Dorsolateral prefrontal cortex (tissue), 120 donors: ENCODE measurements at regions of chr17 and their contacts with region 1.

Region 1: GRCh38 chr17:72151565-72152391 is 31.0 kb downstream of the SOX9 start:
- DNase-seq: peak in 9 of 10 donors; percentile 46 to 81 (median 63)
- H3K4me3 ChIP-seq: peak overlapping the region in 53 of 59 donors; percentile 4 to 64 (median 37)
- H3K27ac ChIP-seq: peak overlapping the region; percentile 29 to 98 (median 93)
- H3K27me3 ChIP-seq: no peaks in the 10 kb centered on the region
- CTCF ChIP-seq: peak in 5 of 56 donors; percentile 4 to 16 (median 12)

Region 2: GRCh38 chr17:72171703-72172667 is 20.2 kb after region 1 on chr17:
- intact Hi-C with region 1: loop called in 1 of 2 experiments (anchors 1 kb)
- DNase-seq: peak in 4 of 10 donors; percentile 32 to 67 (median 52)
- H3K4me3 ChIP-seq: peak overlapping the region in 18 of 59 donors; percentile 0 to 44 (median 11)
- H3K27ac ChIP-seq: peak overlapping the region in 56 of 59 donors; percentile 2 to 80 (median 57)
- H3K27me3 ChIP-seq: no peaks in the 10 kb centered on the region
- CTCF ChIP-seq: peak in 51 of 56 donors; percentile 8 to 66 (median 39)

Region 3: GRCh38 chr17:72743037-72743467 is 591.3 kb after region 1 on chr17:
- intact Hi-C with region 1: no loop called
- DNase-seq: no peak
- H3K4me3 ChIP-seq: no peak overlapping the region
- H3K27ac ChIP-seq: no peak overlapping the region
- H3K27me3 ChIP-seq: no peaks in the 10 kb centered on the region
- CTCF ChIP-seq: no peak